B cell (primary cell): ENCODE measurements at regions of chr15 and their contacts with region 1.

Region 1: DNA sequence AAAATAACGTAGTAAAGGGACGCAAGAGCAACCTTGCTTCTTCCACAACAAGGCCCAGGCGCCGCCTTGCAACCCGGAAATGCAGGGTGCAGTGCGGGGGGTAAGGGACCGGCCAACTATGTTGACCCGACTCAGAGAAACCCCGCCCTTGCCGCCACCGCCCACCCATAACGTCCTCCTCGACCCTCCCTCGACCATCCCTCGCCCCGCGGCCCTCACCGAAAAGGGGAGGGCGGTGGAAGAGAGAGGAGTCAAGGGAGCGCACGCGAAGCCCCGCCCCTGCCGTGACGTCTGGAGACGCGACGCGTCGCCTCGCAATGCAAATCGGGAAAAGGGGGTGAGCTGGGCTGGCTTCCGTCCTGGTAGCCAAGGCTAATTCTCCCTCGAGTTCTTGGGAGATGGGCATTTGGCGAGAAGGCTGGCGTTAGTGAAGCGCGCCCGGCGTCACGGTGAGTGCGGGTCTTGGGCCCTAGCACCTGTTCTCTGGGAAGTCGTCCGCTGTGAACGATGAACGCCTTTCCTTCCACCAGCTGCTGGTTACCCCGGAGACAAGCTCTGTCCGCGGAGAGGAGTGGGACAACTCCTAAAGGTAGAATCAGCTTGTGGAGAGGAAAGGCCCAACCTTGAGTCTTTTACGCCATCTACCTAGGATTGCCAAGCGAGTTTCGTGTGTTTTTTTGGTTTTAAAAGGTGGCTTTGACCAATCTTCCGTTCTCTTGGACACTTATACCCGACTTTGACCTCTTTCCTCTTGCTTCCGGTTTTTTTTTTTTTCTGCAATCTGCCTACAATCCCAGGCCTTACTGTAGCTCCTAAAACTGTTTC is at the start of gene USP8:
- DNase-seq: peak; percentile 97
- ATAC-seq: peak; percentile 97
- H3K4me3 ChIP-seq: peak within 1 kb of the TSS; percentile 78 to 100 (median 83)
- H3K4me3 Mint-ChIP-seq: peak within 1 kb of the TSS; percentile 98
- H3K27ac ChIP-seq: peak within 1 kb of the TSS; percentile 95 to 98
- H3K27ac Mint-ChIP-seq: peak within 1 kb of the TSS; percentile 96
- H3K4me1 ChIP-seq: peaks cover 19 to 22% of the 10 kb centered on the region in 2 donors
- H3K4me1 Mint-ChIP-seq: peaks cover 37% of the 10 kb centered on the region
- H3K27me3 ChIP-seq: no peaks in the 10 kb centered on the region
- H3K27me3 Mint-ChIP-seq: no peaks in the 10 kb centered on the region
- CTCF ChIP-seq: no peak
- total RNA-seq, gene USP8: 126 TPM in 2 replicates

Region 2: DNA sequence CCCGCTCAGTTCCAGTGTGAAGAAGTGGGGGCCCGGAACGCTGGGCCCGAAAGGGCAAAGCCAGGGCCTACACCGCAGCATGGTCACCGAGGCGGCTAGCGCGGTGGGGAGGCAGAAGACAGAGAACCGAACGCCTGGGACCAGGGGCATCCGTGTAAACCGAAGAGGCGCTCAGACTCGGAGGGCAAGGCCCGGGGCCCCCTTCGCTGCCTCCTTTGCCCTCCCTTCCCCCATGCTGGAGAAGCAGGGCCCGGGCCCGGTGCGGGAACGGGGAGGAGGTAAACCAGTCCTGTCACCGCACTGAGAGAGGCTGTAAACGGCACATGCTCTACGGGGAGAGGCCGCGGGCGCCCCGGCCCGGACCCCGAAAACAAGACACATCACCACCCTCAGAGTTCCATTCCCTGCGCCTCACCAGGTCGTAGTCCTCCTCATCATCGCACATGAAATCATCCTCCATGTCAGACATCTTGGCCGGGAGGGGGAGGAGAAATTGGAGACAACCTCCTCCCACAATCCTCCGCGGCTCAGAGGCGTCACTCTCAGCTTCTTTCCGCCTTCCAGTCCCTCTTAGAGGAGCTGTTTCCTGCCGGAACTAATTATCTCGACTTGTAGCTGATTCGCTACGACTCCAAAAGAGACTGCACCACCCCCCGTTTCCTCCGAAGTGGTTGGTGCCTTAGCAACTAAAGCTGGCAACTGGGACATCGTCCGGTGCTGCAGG is 1269.0 kb before region 1 on chr15 and contains the start of gene COPS2:
- CTCF ChIA-PET with region 1: no interaction called
- POLR2A ChIA-PET with region 1: no interaction called
- intact Hi-C with region 1: loop called (anchors 2 kb)
- DNase-seq: peak; percentile 97
- ATAC-seq: peak; percentile 93
- H3K4me3 ChIP-seq: peak within 1 kb of the TSS; percentile 80 to 99 (median 90)
- H3K4me3 Mint-ChIP-seq: peak within 1 kb of the TSS; percentile 98
- H3K27ac ChIP-seq: peak within 1 kb of the TSS; percentile 92 to 94
- H3K27ac Mint-ChIP-seq: peak within 1 kb of the TSS; percentile 96
- H3K4me1 ChIP-seq: peaks cover 11 to 25% of the 10 kb centered on the region in 2 donors
- H3K4me1 Mint-ChIP-seq: peaks cover 41% of the 10 kb centered on the region
- H3K27me3 ChIP-seq: no peaks in the 10 kb centered on the region
- H3K27me3 Mint-ChIP-seq: no peaks in the 10 kb centered on the region
- CTCF ChIP-seq: peak; percentile 9
- total RNA-seq, gene COPS2: 44.5 and 47.8 TPM in 2 replicates

Region 3: GRCh38 chr15:50162988-50163718 is 261.1 kb before region 1 on chr15:
- CTCF ChIA-PET with region 1: no interaction called
- POLR2A ChIA-PET with region 1: no interaction called
- intact Hi-C with region 1: no loop called
- DNase-seq: no peak
- ATAC-seq: no peak
- H3K4me3 ChIP-seq: no peak overlapping the region
- H3K4me3 Mint-ChIP-seq: no peak overlapping the region
- H3K27ac ChIP-seq: no peak overlapping the region
- H3K27ac Mint-ChIP-seq: no peak overlapping the region
- H3K4me1 ChIP-seq: peaks cover 0 to 7% of the 10 kb centered on the region in 2 donors
- H3K4me1 Mint-ChIP-seq: peaks cover 3% of the 10 kb centered on the region
- H3K27me3 ChIP-seq: peaks cover 0 to 5% (median 0%) of the 10 kb centered on the region in 4 experiments
- H3K27me3 Mint-ChIP-seq: peaks cover 22% of the 10 kb centered on the region
- CTCF ChIP-seq: no peak

Region 4: GRCh38 chr15:50440932-50441331 is 16.7 kb after region 1 on chr15:
- CTCF ChIA-PET with region 1: interaction called, 4 read pairs
- POLR2A ChIA-PET with region 1: interaction called, 12 read pairs
- intact Hi-C with region 1: loop called (anchors 1 kb)
- DNase-seq: no peak
- ATAC-seq: no peak
- H3K4me3 ChIP-seq: no peak overlapping the region
- H3K4me3 Mint-ChIP-seq: no peak overlapping the region
- H3K27ac ChIP-seq: peak overlapping the region in 1 of 2 donors; percentile 26
- H3K27ac Mint-ChIP-seq: peak overlapping the region; percentile 59
- H3K4me1 ChIP-seq: peaks cover 20 to 24% of the 10 kb centered on the region in 2 donors
- H3K4me1 Mint-ChIP-seq: peaks cover 26% of the 10 kb centered on the region
- H3K27me3 ChIP-seq: no peaks in the 10 kb centered on the region
- H3K27me3 Mint-ChIP-seq: no peaks in the 10 kb centered on the region
- CTCF ChIP-seq: no peak

Region 5: DNA sequence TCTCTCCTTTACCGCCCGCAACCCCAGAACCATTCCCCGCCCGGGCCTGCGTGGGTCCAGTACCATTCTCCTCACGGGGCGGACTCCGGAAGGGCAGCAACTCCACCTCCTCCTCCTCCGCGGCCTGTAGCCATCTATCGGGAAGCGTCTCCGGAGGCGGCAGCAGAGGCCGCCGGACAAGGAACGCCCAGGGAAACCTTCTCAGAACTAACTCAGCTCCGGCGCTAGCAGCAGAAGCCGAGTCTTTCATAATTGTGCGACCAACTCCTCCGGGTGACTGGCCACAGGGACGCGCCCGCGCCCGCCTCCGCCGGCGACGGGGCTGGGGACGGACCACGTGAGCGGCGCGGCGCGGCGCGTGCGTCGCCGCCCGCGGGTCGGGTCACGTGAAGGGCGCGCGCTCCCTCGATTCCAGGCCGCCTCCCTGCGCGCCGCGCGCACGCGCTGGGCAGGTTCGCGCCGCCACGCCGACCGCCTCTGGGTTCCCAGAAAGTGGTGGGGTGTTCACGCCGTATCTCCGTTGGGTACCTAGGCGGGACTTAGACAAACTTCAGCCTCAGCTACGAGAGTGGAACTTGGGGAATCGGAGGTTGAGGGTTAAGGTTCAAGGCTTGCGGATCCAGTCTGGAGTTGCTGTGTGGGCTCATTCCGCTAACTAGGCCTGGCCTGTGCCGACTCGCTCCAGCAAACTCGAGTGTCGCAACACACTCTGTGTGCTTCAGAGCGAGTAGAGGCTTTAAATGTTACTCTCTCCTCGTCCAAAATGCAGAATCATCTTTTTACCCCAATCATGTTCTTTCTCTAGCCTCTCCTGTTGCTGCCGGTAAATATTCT is 262.4 kb after region 1 on chr15 and contains the start of gene TRPM7:
- CTCF ChIA-PET with region 1: no interaction called
- POLR2A ChIA-PET with region 1: no interaction called
- intact Hi-C with region 1: loop called (anchors 1 kb)
- DNase-seq: peak; percentile 97
- ATAC-seq: peak; percentile 81
- H3K4me3 ChIP-seq: peak within 1 kb of the TSS; percentile 74 to 100 (median 96)
- H3K4me3 Mint-ChIP-seq: peak within 1 kb of the TSS; percentile 100
- H3K27ac ChIP-seq: peak within 1 kb of the TSS; percentile 98 to 100
- H3K27ac Mint-ChIP-seq: peak within 1 kb of the TSS; percentile 99
- H3K4me1 ChIP-seq: peaks cover 19 to 24% of the 10 kb centered on the region in 2 donors
- H3K4me1 Mint-ChIP-seq: peaks cover 46% of the 10 kb centered on the region
- H3K27me3 ChIP-seq: no peaks in the 10 kb centered on the region
- H3K27me3 Mint-ChIP-seq: no peaks in the 10 kb centered on the region
- CTCF ChIP-seq: no peak
- total RNA-seq, gene TRPM7: 77.2 and 86.4 TPM in 2 replicates

Region 6: DNA sequence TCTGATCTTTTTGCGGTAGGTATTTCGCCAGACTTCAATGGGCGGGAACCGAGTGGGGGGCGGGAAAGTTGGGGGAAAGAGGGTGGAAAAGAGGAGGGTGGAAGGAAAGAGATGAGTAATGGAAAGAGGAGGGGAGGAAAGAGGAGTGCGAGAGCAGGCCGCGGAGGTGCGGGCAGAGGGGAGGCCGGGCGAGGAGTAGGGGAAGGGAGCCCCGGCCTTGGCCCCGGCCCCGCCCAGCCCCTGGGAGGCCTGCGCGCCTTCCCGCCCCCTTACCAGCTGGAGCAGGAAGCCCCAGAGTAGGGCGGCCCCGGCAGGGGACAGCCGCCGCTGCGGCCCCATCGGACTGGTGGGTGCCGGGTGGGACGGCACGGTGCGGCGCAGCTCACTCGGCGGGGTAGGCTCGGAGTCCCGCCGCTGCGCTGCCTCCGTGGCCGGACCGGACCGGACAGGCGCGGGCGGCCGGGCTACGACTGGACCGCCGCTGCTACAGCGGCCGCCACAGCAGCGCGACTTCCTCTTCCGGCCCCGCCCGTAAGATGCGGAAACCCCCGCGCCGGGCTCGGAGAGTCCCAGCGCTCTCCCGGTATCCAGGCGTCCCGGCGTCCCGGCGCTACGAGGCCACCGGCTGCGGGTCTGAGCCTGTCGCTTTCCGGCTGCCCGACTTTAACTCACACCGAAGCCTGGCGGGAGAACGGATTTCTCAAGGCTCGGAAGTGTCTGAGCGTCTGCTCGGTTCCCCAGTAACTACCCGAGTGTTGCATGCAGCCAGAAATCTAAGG is 341.1 kb after region 1 on chr15 and contains the start of gene SPPL2A:
- CTCF ChIA-PET with region 1: no interaction called
- POLR2A ChIA-PET with region 1: no interaction called
- intact Hi-C with region 1: loop called (anchors 10 kb)
- DNase-seq: peak; percentile 91
- ATAC-seq: peak; percentile 94
- H3K4me3 ChIP-seq: peak within 1 kb of the TSS; percentile 84 to 98 (median 93)
- H3K4me3 Mint-ChIP-seq: peak within 1 kb of the TSS; percentile 88
- H3K27ac ChIP-seq: peak within 1 kb of the TSS; percentile 91
- H3K27ac Mint-ChIP-seq: peak within 1 kb of the TSS; percentile 93
- H3K4me1 ChIP-seq: peaks cover 17 to 23% of the 10 kb centered on the region in 2 donors
- H3K4me1 Mint-ChIP-seq: peaks cover 39% of the 10 kb centered on the region
- H3K27me3 ChIP-seq: no peaks in the 10 kb centered on the region
- H3K27me3 Mint-ChIP-seq: no peaks in the 10 kb centered on the region
- CTCF ChIP-seq: no peak
- total RNA-seq, gene SPPL2A: 78.3 and 78.4 TPM in 2 replicates